Activated CD4-positive, alpha-beta memory T cell treated with anti-CD3 and anti-CD28 coated beads for 36 hours (primary cell): ENCODE measurements at regions of chr14 and their contacts with region 1.

Region 1: GRCh38 chr14:105020815-105021655 is at the start of gene CDCA4:
- DNase-seq: peak; percentile 98
- H3K4me3 Mint-ChIP-seq: peak within 1 kb of the TSS; percentile 93
- H3K27ac Mint-ChIP-seq: peak within 1 kb of the TSS; percentile 88
- H3K4me1 Mint-ChIP-seq: peaks cover 70% of the 10 kb centered on the region
- H3K27me3 Mint-ChIP-seq: no peaks in the 10 kb centered on the region
- total RNA-seq, gene CDCA4: 63.4 to 69.1 TPM

Region 2: GRCh38 chr14:104976198-104977007 is 44.6 kb before region 1 on chr14:
- CTCF ChIA-PET with region 1: interaction called, 15 read pairs
- POLR2A ChIA-PET with region 1: no interaction called
- intact Hi-C with region 1: loop called (anchors 2 kb)
- DNase-seq: peak; percentile 91
- H3K4me3 Mint-ChIP-seq: peak overlapping the region; percentile 34
- H3K27ac Mint-ChIP-seq: peak overlapping the region; percentile 39
- H3K4me1 Mint-ChIP-seq: peaks cover 10% of the 10 kb centered on the region
- H3K27me3 Mint-ChIP-seq: peaks cover 25% of the 10 kb centered on the region

Region 3: GRCh38 chr14:105005929-105006830 is 14.9 kb before region 1 on chr14:
- CTCF ChIA-PET with region 1: interaction called, 4 read pairs
- POLR2A ChIA-PET with region 1: interaction called, 7 read pairs
- intact Hi-C with region 1: loop called (anchors 2 kb)
- DNase-seq: no peak
- H3K4me3 Mint-ChIP-seq: no peak overlapping the region
- H3K27ac Mint-ChIP-seq: no peak overlapping the region
- H3K4me1 Mint-ChIP-seq: peaks cover 2% of the 10 kb centered on the region
- H3K27me3 Mint-ChIP-seq: no peaks in the 10 kb centered on the region

Region 4: DNA sequence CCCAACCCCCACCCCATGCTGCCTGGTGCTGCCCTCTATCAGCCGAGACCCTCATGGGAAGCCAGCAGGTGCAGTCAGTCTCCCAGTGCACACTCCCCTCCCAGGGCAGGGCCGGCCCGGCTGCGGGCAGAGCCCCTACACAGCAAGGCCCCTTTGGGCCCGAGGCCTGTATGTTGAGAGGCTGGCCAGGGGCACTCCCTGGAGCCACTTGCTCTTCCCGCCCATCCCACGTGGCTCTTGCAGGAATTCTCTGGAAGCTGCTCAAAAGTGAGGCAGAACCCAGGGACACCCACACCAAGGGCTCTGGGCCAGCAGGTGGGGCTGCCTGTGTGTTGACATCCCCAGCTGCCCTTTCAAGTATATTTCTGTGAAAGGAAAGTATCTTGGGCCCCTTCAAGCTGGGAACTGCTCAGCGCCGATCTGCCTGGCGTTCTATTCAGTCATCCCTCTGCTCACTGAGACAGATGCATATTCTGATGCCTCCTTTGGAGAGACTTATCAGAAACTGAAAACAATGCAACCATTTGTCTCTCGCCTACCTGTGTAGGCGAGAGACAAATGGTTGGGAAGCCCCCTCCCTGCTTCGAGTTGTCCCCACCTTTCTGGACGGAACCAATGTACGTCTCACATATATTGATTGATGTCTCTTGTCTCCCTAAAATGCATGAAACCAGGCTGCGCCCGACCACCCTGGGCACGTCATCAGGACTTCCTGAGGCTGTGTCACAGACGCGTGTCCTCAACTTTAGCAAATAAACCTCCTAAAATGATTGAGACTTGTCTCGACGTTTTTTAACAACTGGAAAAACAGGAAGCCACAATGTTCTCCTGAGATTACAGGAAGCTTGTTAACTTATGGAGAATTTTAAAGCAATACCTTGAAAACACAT is 38.2 kb after region 1 on chr14:
- CTCF ChIA-PET with region 1: interaction called, 5 read pairs
- POLR2A ChIA-PET with region 1: interaction called, 5 read pairs
- intact Hi-C with region 1: loop called (anchors 1 kb)
- DNase-seq: peak; percentile 81
- H3K4me3 Mint-ChIP-seq: peak overlapping the region; percentile 94
- H3K27ac Mint-ChIP-seq: peak overlapping the region; percentile 89
- H3K4me1 Mint-ChIP-seq: peaks cover 46% of the 10 kb centered on the region
- H3K27me3 Mint-ChIP-seq: no peaks in the 10 kb centered on the region

Region 5: DNA sequence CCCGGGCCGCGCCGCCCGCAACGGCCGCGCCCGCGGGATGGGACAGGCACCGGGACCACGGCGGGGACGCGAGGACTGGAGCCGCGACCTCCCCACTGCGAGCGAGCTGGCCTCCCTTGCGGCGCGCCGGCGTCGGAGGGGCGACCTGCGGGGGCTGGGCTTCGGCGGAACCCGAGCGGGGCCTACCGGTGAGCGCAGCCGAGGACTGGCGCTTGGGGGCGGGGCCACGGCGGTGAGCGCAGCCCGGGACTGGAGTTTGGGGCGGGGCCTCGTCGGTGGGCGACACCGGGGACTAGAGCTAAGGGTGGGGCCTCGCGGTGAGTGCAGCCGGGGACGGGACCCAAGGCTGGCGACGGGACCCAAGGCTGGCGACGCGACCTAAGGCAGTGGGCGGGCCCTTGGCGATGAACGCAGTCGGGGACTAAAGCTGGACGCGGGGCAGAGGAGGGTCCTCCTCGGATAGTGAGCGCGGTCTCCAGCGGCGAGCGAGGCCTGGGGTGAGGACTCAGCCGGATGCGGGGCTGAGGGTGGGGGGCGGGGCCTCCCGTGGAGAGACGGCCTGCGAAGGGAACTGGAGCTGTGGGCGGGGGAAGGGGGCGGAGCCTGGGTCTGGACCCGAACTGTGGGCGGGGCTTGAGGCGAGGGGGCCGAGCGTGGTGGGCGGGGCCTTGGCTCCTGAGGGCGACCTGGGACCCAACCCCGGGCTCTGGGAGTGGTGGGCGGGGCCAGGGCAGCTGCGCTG is 279.9 kb after region 1 on chr14 and contains the start of gene BRF1:
- CTCF ChIA-PET with region 1: interaction called, 4 read pairs
- POLR2A ChIA-PET with region 1: interaction called, 4 read pairs
- intact Hi-C with region 1: loop called (anchors 2 kb)
- DNase-seq: peak; percentile 99
- H3K4me3 Mint-ChIP-seq: peak within 1 kb of the TSS; percentile 84
- H3K27ac Mint-ChIP-seq: peak within 1 kb of the TSS; percentile 93
- H3K4me1 Mint-ChIP-seq: peaks cover 27% of the 10 kb centered on the region
- H3K27me3 Mint-ChIP-seq: no peaks in the 10 kb centered on the region
- total RNA-seq, gene BRF1: 25.5 to 27.4 TPM